ENCODE measurements at regions of chr11 and their contacts with region 1.

Region 1: GRCh38 chr11:27234043-27234668 is 128.9 kb downstream of the CCDC34 start:
- DNase-seq: peak; percentile 100
- H3K4me3 ChIP-seq: peak overlapping the region; percentile 41
- CTCF ChIP-seq: no peak

Region 2: GRCh38 chr11:26985943-26986342 is 248.2 kb before region 1 on chr11:
- CTCF ChIA-PET with region 1: no interaction called
- POLR2A ChIA-PET with region 1: no interaction called
- DNase-seq: no peak
- H3K4me3 ChIP-seq: no peak overlapping the region
- CTCF ChIP-seq: no peak

Region 3: DNA sequence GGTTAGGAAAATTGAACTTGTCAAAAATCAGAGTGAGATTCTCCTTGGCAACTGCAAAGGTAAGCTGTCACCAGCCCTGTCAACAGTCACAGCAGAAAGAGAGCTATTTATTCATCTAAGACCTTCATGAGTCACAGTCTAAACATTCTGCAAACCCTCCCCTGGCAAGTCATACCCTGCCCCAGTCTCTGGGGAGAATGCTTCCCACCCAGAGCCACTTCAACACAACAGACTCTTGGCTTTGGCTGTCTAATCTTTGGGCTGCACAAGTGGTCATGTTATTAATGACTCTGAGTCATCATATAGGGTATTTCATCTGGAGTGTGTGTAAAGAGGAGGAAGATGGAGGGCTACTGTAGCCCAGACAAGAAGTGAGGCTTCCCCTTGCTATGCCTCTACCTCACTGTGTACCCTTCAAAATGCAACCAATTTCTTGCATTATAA is 24.6 kb before region 1 on chr11:
- CTCF ChIA-PET with region 1: interaction called, 4 read pairs
- POLR2A ChIA-PET with region 1: interaction called, 10 read pairs
- DNase-seq: peak; percentile 78
- H3K4me3 ChIP-seq: no peak overlapping the region
- CTCF ChIP-seq: no peak

Region 4: GRCh38 chr11:27216270-27217149 is 17.6 kb before region 1 on chr11:
- CTCF ChIA-PET with region 1: interaction called, 4 read pairs
- POLR2A ChIA-PET with region 1: interaction called, 30 read pairs
- DNase-seq: no peak
- H3K4me3 ChIP-seq: no peak overlapping the region
- CTCF ChIP-seq: no peak

Region 5: GRCh38 chr11:27281740-27282590 is 47.8 kb after region 1 on chr11:
- CTCF ChIA-PET with region 1: no interaction called
- POLR2A ChIA-PET with region 1: interaction called, 13 read pairs
- DNase-seq: peak; percentile 93
- H3K4me3 ChIP-seq: no peak overlapping the region
- CTCF ChIP-seq: no peak

Region 6: DNA sequence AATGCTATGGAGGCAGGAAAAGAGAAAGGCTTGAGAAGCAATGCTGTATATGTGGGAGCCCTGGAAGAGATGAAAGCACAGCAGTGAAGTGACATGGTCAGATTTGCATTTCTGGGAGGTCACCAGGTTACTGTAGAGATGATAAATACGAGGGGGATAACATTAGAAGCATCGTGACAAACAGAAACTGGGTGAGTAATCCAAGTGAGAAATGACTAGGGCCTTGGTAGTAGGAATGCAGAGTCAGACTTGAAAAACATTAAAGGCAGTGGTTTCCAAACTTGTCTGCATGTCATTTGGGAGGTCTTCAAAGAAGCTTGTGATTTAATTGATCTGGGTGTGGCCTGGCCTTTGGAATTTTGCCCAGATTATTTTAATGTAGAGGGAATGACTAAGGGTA is 84.9 kb after region 1 on chr11:
- CTCF ChIA-PET with region 1: no interaction called
- POLR2A ChIA-PET with region 1: no interaction called
- DNase-seq: peak; percentile 38
- H3K4me3 ChIP-seq: no peak overlapping the region
- CTCF ChIP-seq: no peak

Region 7: DNA sequence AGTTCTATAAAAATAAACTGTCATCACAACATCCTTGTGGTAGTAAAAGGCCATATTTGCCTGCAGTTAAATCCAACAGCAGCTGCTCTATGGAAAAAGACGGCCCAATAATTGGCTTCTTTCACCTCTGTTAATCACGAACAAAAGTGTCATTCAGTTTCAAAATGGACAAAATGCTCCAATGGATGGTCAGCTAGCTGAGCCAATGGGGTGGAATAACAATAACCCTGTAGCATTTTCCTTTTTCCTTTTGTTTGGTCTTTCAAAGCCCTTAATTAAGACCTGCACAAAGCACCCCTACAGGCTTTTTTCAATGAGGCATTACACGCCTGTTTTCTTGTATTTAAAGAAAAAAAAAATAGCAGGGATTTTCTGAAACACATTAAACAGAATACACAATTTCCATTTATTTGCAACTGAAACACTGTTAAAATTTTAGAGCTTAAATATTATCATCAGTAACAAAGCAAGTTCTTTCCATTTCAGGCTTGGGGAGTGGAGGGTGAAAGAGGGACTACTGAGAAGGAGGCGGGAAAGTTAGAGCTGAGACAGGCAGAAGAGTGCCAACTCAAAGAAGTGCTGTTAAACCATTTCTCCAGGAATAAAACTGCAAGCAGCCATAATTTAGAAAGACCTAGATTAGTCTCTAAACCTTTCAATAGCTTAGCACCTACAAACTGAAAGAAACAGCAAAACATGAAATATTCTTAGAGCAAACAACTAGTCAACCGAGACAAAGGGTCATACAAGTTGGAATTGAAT is 209.8 kb after region 1 on chr11:
- CTCF ChIA-PET with region 1: no interaction called
- POLR2A ChIA-PET with region 1: no interaction called
- DNase-seq: no peak
- H3K4me3 ChIP-seq: no peak overlapping the region
- CTCF ChIP-seq: no peak